ENCODE measurements at regions of chr3 and their contacts with region 1.

Region 1: GRCh38 chr3:46895204-46895660 is 17.7 kb downstream of the PTH1R start:
- DNase-seq: peak; percentile 87
- ATAC-seq: peak; percentile 77
- H3K4me3 Mint-ChIP-seq: no peak overlapping the region
- H3K27ac Mint-ChIP-seq: no peak overlapping the region
- H3K4me1 Mint-ChIP-seq: no peaks in the 10 kb centered on the region
- H3K27me3 Mint-ChIP-seq: peaks cover 51% of the 10 kb centered on the region
- CTCF ChIP-seq: peak; percentile 86

Region 2: GRCh38 chr3:46705022-46705530 is 190.2 kb before region 1 on chr3:
- CTCF ChIA-PET with region 1: interaction called, 20 read pairs
- POLR2A ChIA-PET with region 1: no interaction called
- intact Hi-C with region 1: loop called (anchors 1 kb)
- DNase-seq: peak; percentile 78
- ATAC-seq: peak; percentile 90
- H3K4me3 Mint-ChIP-seq: no peak overlapping the region
- H3K27ac Mint-ChIP-seq: no peak overlapping the region
- H3K4me1 Mint-ChIP-seq: peaks cover 4% of the 10 kb centered on the region
- H3K27me3 Mint-ChIP-seq: peaks cover 7% of the 10 kb centered on the region
- CTCF ChIP-seq: peak; percentile 95

Region 3: DNA sequence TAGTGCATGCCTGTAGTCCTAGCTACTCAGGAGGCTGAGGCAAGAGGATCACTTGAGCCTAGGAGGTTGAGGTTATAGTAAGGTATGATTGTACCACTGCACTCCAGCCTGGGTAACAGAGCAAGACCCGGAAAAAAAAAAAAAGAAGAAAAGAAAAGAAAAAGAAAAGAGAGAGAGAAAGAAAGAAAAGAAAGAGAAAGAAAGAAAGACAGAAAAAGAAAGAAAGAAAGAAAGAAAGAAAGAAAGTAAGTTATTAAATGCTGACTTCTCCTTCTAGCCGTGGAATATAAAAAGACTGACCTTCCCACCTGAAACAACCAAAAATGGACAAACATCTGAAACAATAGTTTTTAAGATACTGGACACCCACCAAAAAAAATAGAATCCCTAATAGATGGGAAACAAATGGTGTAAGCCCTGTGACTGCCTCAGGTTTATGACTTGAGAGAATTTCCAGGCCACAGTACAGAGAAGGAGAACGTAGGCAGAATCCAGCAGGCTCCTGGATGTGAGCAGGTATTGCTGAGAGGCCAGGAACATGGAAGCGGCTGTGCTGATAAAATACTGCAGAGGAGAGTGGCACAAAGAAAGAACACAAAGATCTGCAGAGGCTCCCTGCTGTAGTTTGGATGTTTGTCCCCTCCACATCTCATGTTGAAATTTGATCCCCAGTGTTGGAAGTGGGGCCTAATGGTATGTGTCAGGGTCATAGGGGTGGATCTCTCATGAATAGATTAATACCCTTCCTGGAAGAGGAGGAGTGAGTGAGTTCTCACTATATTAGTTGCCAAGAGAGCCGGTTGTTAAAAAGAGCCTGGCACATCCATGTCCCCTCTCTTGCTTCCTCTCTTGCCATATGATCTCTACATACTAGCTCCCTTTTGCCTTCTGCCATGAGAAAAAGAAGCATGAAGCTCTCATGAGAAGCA is 135.7 kb before region 1 on chr3:
- CTCF ChIA-PET with region 1: no interaction called
- POLR2A ChIA-PET with region 1: no interaction called
- intact Hi-C with region 1: no loop called
- DNase-seq: no peak
- ATAC-seq: no peak
- H3K4me3 Mint-ChIP-seq: no peak overlapping the region
- H3K27ac Mint-ChIP-seq: no peak overlapping the region
- H3K4me1 Mint-ChIP-seq: no peaks in the 10 kb centered on the region
- H3K27me3 Mint-ChIP-seq: no peaks in the 10 kb centered on the region
- CTCF ChIP-seq: no peak

Region 4: DNA sequence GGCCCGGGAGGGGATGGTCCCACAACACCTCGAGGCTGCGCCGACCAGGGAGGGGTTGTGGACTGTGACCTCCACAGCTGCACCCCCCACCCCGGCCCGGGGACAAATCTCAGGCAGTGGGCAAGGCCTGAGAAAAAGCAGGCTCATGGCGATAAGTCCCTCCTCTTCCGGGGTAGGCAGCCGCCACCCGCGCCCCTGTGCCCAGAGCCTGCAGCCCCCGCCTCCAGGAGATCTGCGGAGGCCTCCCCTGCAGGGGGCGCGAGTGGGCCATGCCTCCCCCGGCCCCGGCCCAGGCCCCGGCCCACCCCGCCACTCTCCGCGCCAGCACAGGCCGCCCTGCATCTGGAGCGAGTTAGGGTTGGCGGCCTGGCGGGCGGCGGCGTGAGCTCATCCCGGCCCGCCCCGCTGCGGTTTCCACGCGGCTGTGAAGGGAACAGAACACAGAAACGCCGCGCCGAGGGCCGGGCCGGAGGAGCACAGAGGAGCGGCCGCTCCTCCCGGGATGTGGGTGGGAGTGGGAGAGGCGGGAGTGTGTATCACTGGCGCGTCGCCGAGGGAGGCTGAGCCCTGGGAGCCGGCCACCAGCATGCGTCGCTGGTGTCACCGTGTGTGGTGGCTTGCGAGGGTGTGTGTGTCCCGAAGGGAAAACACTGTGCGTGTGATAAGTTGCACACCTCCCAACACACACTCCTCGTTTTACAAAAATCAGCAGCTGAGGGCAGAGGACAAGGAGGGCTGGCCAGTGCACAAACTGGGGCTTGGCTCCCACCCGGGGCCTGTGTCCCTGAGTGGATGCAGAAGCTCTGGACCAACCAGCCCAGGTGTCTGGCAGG is 49.2 kb before region 1 on chr3:
- CTCF ChIA-PET with region 1: interaction called, 12 read pairs
- POLR2A ChIA-PET with region 1: no interaction called
- intact Hi-C with region 1: no loop called
- DNase-seq: peak; percentile 78
- ATAC-seq: peak; percentile 92
- H3K4me3 Mint-ChIP-seq: peak overlapping the region; percentile 65
- H3K27ac Mint-ChIP-seq: peak overlapping the region; percentile 75
- H3K4me1 Mint-ChIP-seq: peaks cover 5% of the 10 kb centered on the region
- H3K27me3 Mint-ChIP-seq: no peaks in the 10 kb centered on the region
- CTCF ChIP-seq: no peak

Region 5: DNA sequence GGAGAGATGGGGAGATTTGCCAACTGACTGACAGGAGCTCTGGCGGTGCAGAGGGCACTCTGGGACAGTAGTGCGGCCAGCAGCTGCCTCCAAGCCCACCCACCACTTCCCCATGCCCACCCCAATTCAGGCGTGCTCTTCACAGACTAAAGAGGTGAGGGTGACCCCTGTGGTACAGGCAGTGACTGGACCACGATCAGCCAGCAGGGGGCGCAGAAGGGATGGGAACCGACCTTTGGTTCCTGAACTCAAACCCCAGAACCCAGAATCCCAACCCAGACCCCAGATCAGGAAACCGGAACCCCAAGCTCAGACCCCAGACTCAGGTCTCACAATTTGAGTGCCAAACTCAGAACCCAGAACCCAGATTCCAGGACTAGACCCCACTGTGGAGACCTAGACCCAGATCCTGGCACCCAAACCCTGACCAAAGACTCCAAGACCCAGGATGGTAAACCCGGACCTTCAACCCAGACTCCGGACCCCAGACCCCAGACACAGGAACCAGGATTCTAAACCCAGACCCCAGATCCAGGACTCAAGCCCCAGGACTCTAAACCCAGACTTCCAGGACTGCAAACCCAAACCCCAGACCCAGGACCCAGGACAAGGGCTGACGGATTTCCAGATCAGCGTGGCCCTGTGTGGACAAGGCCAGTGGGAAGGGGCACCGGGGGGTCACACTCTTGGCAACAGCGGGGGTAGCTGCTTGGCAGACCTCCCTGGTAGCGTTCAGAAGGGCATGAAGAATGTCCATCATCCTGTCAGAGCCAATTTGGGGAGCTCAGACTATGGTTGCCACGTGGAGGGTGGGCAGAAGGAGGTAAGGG is 28.3 kb before region 1 on chr3:
- CTCF ChIA-PET with region 1: interaction called, 23 read pairs
- POLR2A ChIA-PET with region 1: interaction called, 3 read pairs
- intact Hi-C with region 1: loop called (anchors 2 kb)
- DNase-seq: peak; percentile 87
- ATAC-seq: peak; percentile 81
- H3K4me3 Mint-ChIP-seq: no peak overlapping the region
- H3K27ac Mint-ChIP-seq: no peak overlapping the region
- H3K4me1 Mint-ChIP-seq: no peaks in the 10 kb centered on the region
- H3K27me3 Mint-ChIP-seq: no peaks in the 10 kb centered on the region
- CTCF ChIP-seq: peak; percentile 84

Region 6: DNA sequence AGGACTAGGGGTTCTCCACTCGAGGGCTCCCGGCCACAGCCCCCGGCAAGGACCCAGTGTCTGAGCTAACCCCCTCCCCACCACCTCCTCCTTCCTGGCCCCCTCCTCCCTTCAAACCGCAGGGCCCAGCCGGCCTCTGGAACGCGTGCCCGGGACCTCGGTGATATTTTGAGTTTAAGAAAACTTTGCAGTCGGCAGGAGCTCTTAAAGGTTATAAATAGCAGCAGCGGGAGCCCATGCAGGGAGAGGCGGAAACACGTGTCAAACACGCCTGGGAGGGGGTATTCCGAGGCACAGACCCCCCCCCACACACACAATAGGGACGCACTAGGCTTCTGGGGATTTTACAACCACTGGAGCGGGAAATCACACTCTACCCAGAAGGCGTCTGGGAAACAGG is 20.8 kb before region 1 on chr3:
- CTCF ChIA-PET with region 1: interaction called, 13 read pairs
- POLR2A ChIA-PET with region 1: interaction called, 3 read pairs
- intact Hi-C with region 1: no loop called
- DNase-seq: peak; percentile 14
- ATAC-seq: no peak
- H3K4me3 Mint-ChIP-seq: no peak overlapping the region
- H3K27ac Mint-ChIP-seq: no peak overlapping the region
- H3K4me1 Mint-ChIP-seq: peaks cover 16% of the 10 kb centered on the region
- H3K27me3 Mint-ChIP-seq: peaks cover 6% of the 10 kb centered on the region
- CTCF ChIP-seq: no peak

Region 7: DNA sequence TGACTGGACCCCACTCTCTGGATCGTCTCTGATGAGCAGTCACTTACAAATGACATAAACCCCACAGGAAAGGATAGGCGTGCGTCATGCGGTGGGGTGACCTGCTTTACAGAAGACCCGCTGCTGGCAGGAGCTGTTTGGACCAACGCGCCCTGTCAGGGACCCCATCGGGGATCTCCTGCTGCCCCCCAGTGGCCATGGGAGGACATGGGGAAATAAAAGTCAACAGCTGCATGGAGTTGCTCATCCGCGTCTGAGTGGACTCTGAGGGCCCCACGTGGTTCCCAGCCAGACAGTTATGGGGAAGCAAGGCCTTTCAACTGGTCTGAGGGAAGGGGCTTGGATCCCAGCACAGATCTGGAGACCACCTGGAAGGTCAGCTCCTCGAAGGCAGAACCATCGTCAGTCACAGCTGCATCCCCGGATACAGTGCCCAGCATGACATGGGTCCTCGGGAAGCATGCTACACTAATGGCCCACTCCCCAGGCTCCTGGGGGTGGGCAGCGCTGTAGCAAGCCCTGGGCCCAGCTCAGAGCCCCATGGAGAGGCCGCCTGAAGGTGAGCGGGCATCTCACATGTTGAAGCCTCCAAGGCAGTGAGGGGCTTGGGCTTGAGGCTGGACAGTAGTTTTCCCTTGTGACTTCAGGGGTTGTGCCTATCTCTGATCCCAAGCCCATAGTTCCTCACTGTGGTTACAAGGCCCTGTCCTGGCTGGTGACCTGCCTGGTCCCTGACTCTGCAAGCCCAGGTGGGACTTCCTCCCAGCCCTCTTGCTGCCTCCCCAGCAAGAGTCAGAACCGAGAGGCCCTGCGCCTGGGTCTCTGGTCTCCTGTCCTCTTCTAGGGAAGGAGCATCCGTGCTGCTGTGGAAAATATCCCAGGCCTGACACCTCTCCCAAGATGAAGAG is 14.6 kb after region 1 on chr3:
- CTCF ChIA-PET with region 1: interaction called, 11 read pairs
- POLR2A ChIA-PET with region 1: no interaction called
- intact Hi-C with region 1: no loop called
- DNase-seq: peak; percentile 95
- ATAC-seq: peak; percentile 96
- H3K4me3 Mint-ChIP-seq: no peak overlapping the region
- H3K27ac Mint-ChIP-seq: no peak overlapping the region
- H3K4me1 Mint-ChIP-seq: peaks cover 16% of the 10 kb centered on the region
- H3K27me3 Mint-ChIP-seq: no peaks in the 10 kb centered on the region
- CTCF ChIP-seq: peak; percentile 81

Measured in activated CD8-positive, alpha-beta T cell treated with anti-CD3 and anti-CD28 coated beads for 36 hours (primary cell).